ENCODE measurements at regions of chr22 and their contacts with region 1.

Region 1: GRCh38 chr22:38724926-38725571 is 19.3 kb downstream of the GTPBP1 start:
- DNase-seq: no peak
- H3K4me3 ChIP-seq: no peak overlapping the region
- CTCF ChIP-seq: peak; percentile 53

Region 2: DNA sequence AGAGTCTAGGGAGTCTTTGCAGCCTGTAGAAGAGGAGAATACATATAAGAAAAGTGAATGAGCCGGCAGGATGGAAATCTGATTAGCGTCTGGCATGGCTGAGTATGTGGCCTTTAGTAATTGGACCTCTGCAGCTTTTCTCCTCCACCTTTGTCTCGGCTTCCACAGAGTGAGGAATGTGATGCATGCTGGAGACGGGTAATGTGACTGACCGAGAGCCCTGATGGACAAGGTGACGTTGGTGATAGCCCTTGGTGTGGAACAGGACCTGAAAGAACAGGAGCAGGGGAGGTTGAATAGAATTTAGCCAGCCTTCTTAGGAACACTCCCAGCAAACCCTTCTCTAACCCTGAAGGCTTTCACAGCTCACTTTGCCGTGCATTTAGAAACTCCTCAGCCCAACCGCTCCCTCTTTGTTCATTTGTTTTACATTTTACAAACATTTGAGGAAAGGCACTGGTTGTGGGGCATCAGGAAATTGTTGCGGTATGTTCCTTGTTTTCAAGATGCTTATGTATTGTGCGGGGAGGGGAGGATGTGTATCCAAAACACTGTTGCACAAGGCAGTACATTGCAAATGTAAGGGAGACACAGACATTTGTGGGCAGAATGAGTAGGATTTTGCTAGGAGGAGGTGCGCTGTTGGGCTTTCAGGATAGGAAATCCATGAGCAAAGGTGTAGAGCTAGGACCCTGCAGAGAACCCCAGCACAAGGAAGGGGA is 12.4 kb before region 1 on chr22:
- CTCF ChIA-PET with region 1: interaction called, 15 read pairs
- POLR2A ChIA-PET with region 1: no interaction called
- DNase-seq: no peak
- H3K4me3 ChIP-seq: no peak overlapping the region
- CTCF ChIP-seq: no peak

Measured in AG04449 (cell line).